ENCODE measurements at regions of chr1 and their contacts with region 1.

Region 1: GRCh38 chr1:155001675-155002463 is 733 bp upstream of the ZBTB7B start:
- DNase-seq: peak; percentile 100
- H3K4me3 ChIP-seq: peak overlapping the region; percentile 73 to 94 (median 81)
- H3K27ac ChIP-seq: peak overlapping the region; percentile 96 to 99 (median 98)
- H3K4me1 ChIP-seq: peaks cover 0 to 50% (median 47%) of the 10 kb centered on the region in 4 donors
- H3K27me3 ChIP-seq: no peaks in the 10 kb centered on the region
- CTCF ChIP-seq: peak in 2 of 4 experiments; percentile 6 to 22
- EP300 ChIP-seq: no peak
- POLR2A ChIP-seq: peak; percentile 91 to 95

Region 2: DNA sequence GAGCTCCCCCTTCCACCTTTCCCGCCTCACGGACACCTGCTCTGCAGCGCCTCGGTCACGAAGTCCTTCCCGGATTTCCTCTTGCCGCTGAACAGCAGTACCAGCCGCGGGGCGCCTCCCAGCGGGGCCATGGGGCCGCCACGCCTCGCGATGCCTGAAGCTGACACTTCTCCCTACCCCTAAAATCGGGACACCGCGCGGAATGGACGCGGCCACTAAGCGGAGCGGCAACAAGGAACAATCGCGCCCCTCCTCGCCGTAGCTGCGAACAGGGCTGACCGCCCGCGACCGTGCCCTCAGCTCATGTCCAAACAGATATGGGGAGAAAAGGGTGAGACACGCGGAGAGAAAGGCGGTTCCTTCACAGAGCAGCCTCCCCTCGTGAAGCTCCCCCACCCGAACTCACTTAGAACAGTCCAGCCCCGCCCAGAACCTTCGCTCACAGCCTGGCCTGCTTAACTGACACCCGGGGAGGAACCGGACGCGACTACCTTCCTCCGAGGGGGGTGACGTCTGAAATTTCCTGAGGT is 65.2 kb before region 1 on chr1 and contains the start of gene PMVK:
- intact Hi-C with region 1: loop called (anchors 2 kb)
- DNase-seq: peak; percentile 99
- H3K4me3 ChIP-seq: peak within 1 kb of the TSS; percentile 66 to 80 (median 70)
- H3K27ac ChIP-seq: peak within 1 kb of the TSS; percentile 90 to 98 (median 96)
- H3K4me1 ChIP-seq: peaks cover 0 to 38% (median 28%) of the 10 kb centered on the region in 4 donors
- H3K27me3 ChIP-seq: no peaks in the 10 kb centered on the region
- CTCF ChIP-seq: peak in 3 of 4 experiments; percentile 16 to 29 (median 28)
- EP300 ChIP-seq: no peak
- POLR2A ChIP-seq: peak; percentile 51 to 54
- total RNA-seq, gene PMVK: 11.1 to 19.6 (median 13.7) TPM

Region 3: DNA sequence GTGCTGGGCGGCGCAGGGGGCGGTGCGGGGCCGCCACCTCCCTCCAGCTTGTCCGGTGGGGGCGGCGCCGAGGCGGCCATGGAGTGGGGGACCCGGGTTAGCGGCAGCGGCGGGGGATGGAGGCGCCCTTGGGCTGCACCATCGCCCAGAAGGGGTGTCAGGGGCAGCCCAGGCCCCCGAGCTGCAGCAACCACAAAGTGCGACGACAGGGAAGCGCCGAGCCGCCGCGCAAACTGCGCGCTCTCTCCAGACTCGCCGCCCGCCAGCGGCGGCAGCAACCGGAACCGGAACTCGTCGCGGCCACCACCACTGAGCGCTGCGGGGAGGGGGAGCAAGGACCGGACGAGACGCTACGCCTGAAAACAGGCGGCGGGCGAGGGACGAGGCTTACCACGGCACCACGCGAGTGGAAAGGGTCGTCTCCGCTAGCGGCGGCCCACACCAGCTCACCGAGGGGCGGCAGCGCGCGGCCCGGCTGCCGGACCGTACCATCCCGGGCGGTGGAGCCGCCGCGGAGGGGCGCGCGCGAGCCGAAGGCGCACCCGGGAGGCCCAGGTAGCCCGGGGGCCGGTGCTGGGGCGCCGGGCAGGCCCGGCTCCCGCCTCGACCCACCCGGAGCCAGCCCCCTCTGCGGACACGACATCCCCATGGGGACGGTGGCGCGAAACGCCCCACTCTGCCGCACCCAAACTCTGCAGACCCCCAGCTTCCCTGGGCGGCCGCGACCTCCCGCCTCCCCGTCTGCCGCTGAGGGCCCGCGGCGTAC is 40.2 kb before region 1 on chr1 and contains the start of gene PYGO2:
- intact Hi-C with region 1: loop called (anchors 5 kb)
- DNase-seq: peak; percentile 88
- H3K4me3 ChIP-seq: peak within 1 kb of the TSS; percentile 69 to 98 (median 92)
- H3K27ac ChIP-seq: peak within 1 kb of the TSS; percentile 94 to 99 (median 96)
- H3K4me1 ChIP-seq: peaks cover 0 to 43% (median 37%) of the 10 kb centered on the region in 4 donors
- H3K27me3 ChIP-seq: no peaks in the 10 kb centered on the region
- CTCF ChIP-seq: peak in 2 of 4 experiments; percentile 42 to 60
- EP300 ChIP-seq: no peak
- POLR2A ChIP-seq: peak; percentile 59 to 87
- total RNA-seq, gene PYGO2: 15.0 to 23.3 (median 16.6) TPM

Region 4: GRCh38 chr1:155050560-155051341 is 48.9 kb after region 1 on chr1 and contains the start of gene ADAM15:
- intact Hi-C with region 1: loop called (anchors 5 kb)
- DNase-seq: peak; percentile 93
- H3K4me3 ChIP-seq: peak within 1 kb of the TSS; percentile 57 to 85 (median 68)
- H3K27ac ChIP-seq: peak within 1 kb of the TSS; percentile 92 to 96 (median 92)
- H3K4me1 ChIP-seq: peaks cover 0 to 33% (median 22%) of the 10 kb centered on the region in 4 donors
- H3K27me3 ChIP-seq: no peaks in the 10 kb centered on the region
- CTCF ChIP-seq: peak; percentile 88 to 94 (median 94)
- EP300 ChIP-seq: no peak
- POLR2A ChIP-seq: peak in 1 of 2 donors; percentile 62
- total RNA-seq, gene ADAM15: 42.6 to 66.7 (median 53.1) TPM

Measured in sigmoid colon (tissue), 7 donors.